A549 (cell line): ENCODE measurements at regions of chr17 and their contacts with region 1.

Region 1: DNA sequence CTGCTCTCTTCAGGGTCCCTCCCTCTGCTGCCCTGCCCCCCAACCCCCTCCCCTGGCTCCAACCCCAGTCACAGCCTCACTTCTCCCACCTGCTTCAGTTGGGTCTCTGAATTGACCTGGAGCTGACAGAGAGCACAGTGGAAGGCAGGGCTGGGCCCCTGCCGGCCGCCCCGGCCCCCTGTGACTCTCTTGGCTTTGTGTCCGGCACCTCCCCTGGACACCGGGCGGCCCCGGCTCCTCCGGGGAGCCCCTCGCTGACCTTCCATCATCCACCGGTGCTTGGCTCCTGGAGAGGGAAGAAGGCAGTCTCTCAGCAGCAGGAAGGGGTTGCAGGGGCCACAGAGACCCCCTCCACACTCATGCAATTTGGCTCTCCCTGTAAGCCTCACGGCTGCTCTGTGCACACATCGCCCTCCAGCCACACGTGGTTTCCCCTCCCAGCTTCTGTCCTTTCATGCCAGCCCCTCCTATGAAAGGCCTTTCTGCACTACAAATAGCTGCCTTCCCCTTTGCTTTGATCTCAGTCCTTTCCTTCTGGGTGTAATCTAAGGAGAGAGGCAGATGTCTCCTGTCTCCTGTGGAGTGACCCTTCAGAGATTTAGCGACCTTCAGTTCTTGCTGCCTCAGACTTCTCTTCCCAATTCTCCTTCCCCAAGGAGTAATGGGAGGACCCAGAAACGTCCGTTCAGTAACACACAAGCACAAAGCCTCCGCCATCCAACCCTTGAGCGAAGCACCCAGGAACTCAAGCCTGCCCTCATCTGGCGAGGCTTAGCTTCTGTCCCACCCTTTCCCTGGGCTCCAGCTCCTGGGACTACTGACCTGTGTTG is 8.3 kb downstream of the NKIRAS2 start:
- DNase-seq: peak; percentile 70 to 71
- ATAC-seq: peak; percentile 58 to 74
- H3K4me3 ChIP-seq: no peak overlapping the region
- H3K27ac ChIP-seq: no peak overlapping the region
- H3K4me1 ChIP-seq: peaks cover 22% of the 10 kb centered on the region
- CTCF ChIP-seq: peak; percentile 43; the same call in 2 of the 3 replicates
- EP300 ChIP-seq: no peak
- POLR2A ChIP-seq: no peak
- RAD21 ChIP-seq: peak in 1 of 2 experiments; percentile 33; a peak in 2 of 5 replicates

Region 2: DNA sequence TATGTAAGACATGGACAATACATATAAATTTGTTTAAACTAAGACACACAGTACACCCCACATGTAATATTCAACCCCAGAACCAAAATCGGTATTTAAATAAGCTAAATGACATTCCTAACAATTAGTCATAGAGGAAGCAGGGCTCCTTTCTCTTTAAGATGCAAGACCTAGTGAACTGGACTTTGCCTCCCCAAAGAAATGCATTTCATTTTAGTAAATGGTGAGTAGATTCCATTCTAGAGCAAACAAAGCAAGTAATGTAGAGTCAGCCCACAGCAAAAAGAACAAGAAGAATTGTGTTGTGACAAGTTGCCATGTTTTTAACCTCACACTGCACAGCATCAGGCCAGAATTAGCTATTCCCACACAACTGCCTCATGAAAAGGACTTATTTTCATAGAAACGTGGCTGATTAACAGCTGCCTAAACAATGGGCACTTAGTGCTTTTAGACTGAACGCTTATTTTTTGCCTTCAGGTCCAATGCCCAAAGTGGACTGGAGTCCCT is 25.3 kb before region 1 on chr17:
- CTCF ChIA-PET with region 1: interaction called, 14 read pairs
- POLR2A ChIA-PET with region 1: no interaction called
- DNase-seq: peak in 1 of 2 experiments; percentile 64
- ATAC-seq: peak; percentile 70 to 86; a peak in 5 of 6 replicates
- H3K4me3 ChIP-seq: peak overlapping the region; percentile 20; the same call in 2 of the 3 replicates
- H3K27ac ChIP-seq: peak overlapping the region; percentile 61 to 84
- H3K4me1 ChIP-seq: peaks cover 46% of the 10 kb centered on the region
- CTCF ChIP-seq: no peak
- EP300 ChIP-seq: no peak
- POLR2A ChIP-seq: no peak
- RAD21 ChIP-seq: no peak